Mammary epithelial cell (primary cell): ENCODE measurements at regions of chr10 and their contacts with region 1.

Region 1: GRCh38 chr10:90007226-90007625 is 305.8 kb downstream of the KIF20B start:
- DNase-seq: peak; percentile 98
- H3K4me3 ChIP-seq: no peak overlapping the region
- H3K27ac ChIP-seq: peak overlapping the region; percentile 92
- H3K4me1 ChIP-seq: peaks cover 18% of the 10 kb centered on the region
- H3K27me3 ChIP-seq: no peaks in the 10 kb centered on the region
- CTCF ChIP-seq: peak; percentile 62 to 89

Region 2: DNA sequence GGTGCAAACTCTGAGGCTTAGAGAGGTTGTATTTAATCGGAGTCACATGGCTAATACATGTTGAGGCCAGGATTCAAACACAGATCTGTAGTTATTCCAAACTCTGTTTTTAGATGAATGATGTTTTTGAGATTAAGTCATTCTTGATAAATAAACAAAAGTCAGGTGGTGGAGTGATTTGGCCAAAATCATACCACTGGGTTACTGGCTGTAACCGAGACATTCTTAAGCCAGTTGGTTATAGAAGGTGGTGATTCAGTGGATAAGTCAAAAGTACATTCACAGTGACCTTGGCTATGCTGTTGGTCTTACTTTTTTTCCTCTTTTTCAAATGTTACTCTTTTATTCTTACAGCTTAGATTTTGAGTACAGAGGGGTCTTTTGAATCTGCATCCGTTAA is 55.6 kb after region 1 on chr10:
- CTCF ChIA-PET with region 1: no interaction called
- dilution Hi-C with region 1: no loop called
- in situ Hi-C with region 1: no loop called
- intact Hi-C with region 1: no loop called
- DNase-seq: no peak
- H3K4me3 ChIP-seq: no peak overlapping the region
- H3K27ac ChIP-seq: no peak overlapping the region
- H3K4me1 ChIP-seq: no peaks in the 10 kb centered on the region
- H3K27me3 ChIP-seq: no peaks in the 10 kb centered on the region
- CTCF ChIP-seq: no peak

Region 3: GRCh38 chr10:90087197-90088007 is 80.2 kb after region 1 on chr10:
- CTCF ChIA-PET with region 1: no interaction called
- dilution Hi-C with region 1: no loop called
- in situ Hi-C with region 1: no loop called
- intact Hi-C with region 1: loop called (anchors 5 kb)
- DNase-seq: peak; percentile 87
- H3K4me3 ChIP-seq: no peak overlapping the region
- H3K27ac ChIP-seq: peak overlapping the region; percentile 89
- H3K4me1 ChIP-seq: peaks cover 11% of the 10 kb centered on the region
- H3K27me3 ChIP-seq: no peaks in the 10 kb centered on the region
- CTCF ChIP-seq: no peak

Region 4: GRCh38 chr10:90138844-90139243 is 131.6 kb after region 1 on chr10:
- CTCF ChIA-PET with region 1: no interaction called
- dilution Hi-C with region 1: no loop called
- in situ Hi-C with region 1: loop called in 1 of 2 experiments (anchors 25 kb)
- intact Hi-C with region 1: loop called (anchors 1 kb)
- DNase-seq: no peak
- H3K4me3 ChIP-seq: no peak overlapping the region
- H3K27ac ChIP-seq: no peak overlapping the region
- H3K4me1 ChIP-seq: no peaks in the 10 kb centered on the region
- H3K27me3 ChIP-seq: no peaks in the 10 kb centered on the region
- CTCF ChIP-seq: peak; percentile 52 to 53

Region 5: DNA sequence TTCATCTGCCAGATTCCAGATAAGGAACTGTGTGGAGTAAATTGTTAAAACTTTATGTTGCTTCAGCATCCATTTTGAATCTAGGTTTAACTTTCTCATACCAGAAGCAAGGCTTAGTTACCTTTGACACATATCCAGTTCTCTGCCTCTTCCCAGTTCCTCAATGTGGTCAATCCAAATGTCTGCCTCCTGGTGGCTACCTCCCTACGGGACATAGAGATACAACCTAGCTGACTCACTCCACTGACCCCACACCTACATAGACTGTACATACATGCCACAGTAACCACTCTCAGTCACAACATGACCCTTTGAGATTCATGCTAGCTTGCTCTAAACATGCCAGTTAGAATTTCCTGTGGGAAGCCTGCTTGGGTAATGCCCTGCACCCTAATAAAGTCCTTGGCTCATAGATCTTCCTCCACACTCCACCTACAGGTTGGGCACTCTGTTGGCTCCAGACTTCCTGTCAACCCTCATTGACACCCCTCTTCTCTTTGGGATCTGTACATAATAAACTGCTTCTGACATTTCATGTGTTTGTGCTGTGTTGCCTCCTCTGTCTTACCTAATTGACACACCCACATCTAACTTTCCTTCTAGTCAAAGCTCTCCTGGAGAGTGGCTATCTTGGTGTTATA is 572.5 kb after region 1 on chr10:
- CTCF ChIA-PET with region 1: no interaction called
- dilution Hi-C with region 1: no loop called
- in situ Hi-C with region 1: no loop called
- intact Hi-C with region 1: loop called (anchors 2 kb)
- DNase-seq: peak; percentile 71
- H3K4me3 ChIP-seq: no peak overlapping the region
- H3K27ac ChIP-seq: no peak overlapping the region
- H3K4me1 ChIP-seq: peaks cover 7% of the 10 kb centered on the region
- H3K27me3 ChIP-seq: no peaks in the 10 kb centered on the region
- CTCF ChIP-seq: peak; percentile 36 to 40

Region 6: GRCh38 chr10:90652519-90652918 is 645.3 kb after region 1 on chr10:
- CTCF ChIA-PET with region 1: no interaction called
- dilution Hi-C with region 1: no loop called
- in situ Hi-C with region 1: no loop called
- intact Hi-C with region 1: loop called (anchors 1 kb)
- DNase-seq: peak; percentile 37
- H3K4me3 ChIP-seq: no peak overlapping the region
- H3K27ac ChIP-seq: no peak overlapping the region
- H3K4me1 ChIP-seq: no peaks in the 10 kb centered on the region
- H3K27me3 ChIP-seq: no peaks in the 10 kb centered on the region
- CTCF ChIP-seq: peak; percentile 60 to 73